MCF 10A (cell line): ENCODE measurements at regions of chr10 and their contacts with region 1.

Region 1: GRCh38 chr10:106355450-106355849 is 809.1 kb downstream of the SORCS1 start:
- DNase-seq: peak; percentile 27
- H3K4me3 Mint-ChIP-seq: no peak overlapping the region
- H3K27ac Mint-ChIP-seq: no peak overlapping the region
- H3K4me1 Mint-ChIP-seq: peaks cover 5% of the 10 kb centered on the region
- H3K27me3 Mint-ChIP-seq: no peaks in the 10 kb centered on the region
- CTCF ChIP-seq: peak; percentile 35

Region 2: GRCh38 chr10:106107706-106108105 is 247.7 kb before region 1 on chr10:
- CTCF ChIA-PET with region 1: no interaction called
- POLR2A ChIA-PET with region 1: no interaction called
- intact Hi-C with region 1: no loop called
- DNase-seq: peak; percentile 65
- H3K4me3 Mint-ChIP-seq: no peak overlapping the region
- H3K27ac Mint-ChIP-seq: peak overlapping the region; percentile 84
- H3K4me1 Mint-ChIP-seq: peaks cover 13% of the 10 kb centered on the region
- H3K27me3 Mint-ChIP-seq: no peaks in the 10 kb centered on the region
- CTCF ChIP-seq: no peak

Region 3: GRCh38 chr10:106317554-106317953 is 37.9 kb before region 1 on chr10:
- CTCF ChIA-PET with region 1: no interaction called
- POLR2A ChIA-PET with region 1: no interaction called
- intact Hi-C with region 1: no loop called
- DNase-seq: no peak
- H3K4me3 Mint-ChIP-seq: no peak overlapping the region
- H3K27ac Mint-ChIP-seq: no peak overlapping the region
- H3K4me1 Mint-ChIP-seq: no peaks in the 10 kb centered on the region
- H3K27me3 Mint-ChIP-seq: no peaks in the 10 kb centered on the region
- CTCF ChIP-seq: no peak

Region 4: DNA sequence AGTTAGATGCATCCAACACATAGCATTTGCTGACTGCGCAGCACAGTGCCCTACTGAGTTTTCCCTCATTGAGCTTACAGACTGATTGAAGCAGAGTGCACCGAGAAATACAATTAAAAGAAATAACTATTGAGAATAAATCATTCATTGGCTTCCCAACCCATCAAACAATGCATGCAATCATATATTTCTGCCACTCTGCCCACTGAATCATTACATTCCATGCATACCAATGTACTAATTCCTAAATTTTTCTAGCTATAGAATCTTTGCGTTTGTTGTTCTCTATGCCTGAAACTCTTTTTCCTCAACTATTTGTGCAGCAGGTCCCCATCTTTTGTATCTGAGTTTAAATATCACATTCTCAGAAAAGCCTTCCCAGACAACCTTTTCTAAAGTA is 25.3 kb after region 1 on chr10:
- CTCF ChIA-PET with region 1: interaction called, 16 read pairs
- POLR2A ChIA-PET with region 1: interaction called, 3 read pairs
- intact Hi-C with region 1: no loop called
- DNase-seq: no peak
- H3K4me3 Mint-ChIP-seq: no peak overlapping the region
- H3K27ac Mint-ChIP-seq: no peak overlapping the region
- H3K4me1 Mint-ChIP-seq: peaks cover 7% of the 10 kb centered on the region
- H3K27me3 Mint-ChIP-seq: no peaks in the 10 kb centered on the region
- CTCF ChIP-seq: no peak

Region 5: GRCh38 chr10:106493751-106494150 is 138.3 kb after region 1 on chr10:
- CTCF ChIA-PET with region 1: no interaction called
- POLR2A ChIA-PET with region 1: no interaction called
- intact Hi-C with region 1: no loop called
- DNase-seq: no peak
- H3K4me3 Mint-ChIP-seq: no peak overlapping the region
- H3K27ac Mint-ChIP-seq: no peak overlapping the region
- H3K4me1 Mint-ChIP-seq: no peaks in the 10 kb centered on the region
- H3K27me3 Mint-ChIP-seq: no peaks in the 10 kb centered on the region
- CTCF ChIP-seq: no peak